Caco-2 (cell line): ENCODE measurements at regions of chr13 and their contacts with region 1.

Region 1: DNA sequence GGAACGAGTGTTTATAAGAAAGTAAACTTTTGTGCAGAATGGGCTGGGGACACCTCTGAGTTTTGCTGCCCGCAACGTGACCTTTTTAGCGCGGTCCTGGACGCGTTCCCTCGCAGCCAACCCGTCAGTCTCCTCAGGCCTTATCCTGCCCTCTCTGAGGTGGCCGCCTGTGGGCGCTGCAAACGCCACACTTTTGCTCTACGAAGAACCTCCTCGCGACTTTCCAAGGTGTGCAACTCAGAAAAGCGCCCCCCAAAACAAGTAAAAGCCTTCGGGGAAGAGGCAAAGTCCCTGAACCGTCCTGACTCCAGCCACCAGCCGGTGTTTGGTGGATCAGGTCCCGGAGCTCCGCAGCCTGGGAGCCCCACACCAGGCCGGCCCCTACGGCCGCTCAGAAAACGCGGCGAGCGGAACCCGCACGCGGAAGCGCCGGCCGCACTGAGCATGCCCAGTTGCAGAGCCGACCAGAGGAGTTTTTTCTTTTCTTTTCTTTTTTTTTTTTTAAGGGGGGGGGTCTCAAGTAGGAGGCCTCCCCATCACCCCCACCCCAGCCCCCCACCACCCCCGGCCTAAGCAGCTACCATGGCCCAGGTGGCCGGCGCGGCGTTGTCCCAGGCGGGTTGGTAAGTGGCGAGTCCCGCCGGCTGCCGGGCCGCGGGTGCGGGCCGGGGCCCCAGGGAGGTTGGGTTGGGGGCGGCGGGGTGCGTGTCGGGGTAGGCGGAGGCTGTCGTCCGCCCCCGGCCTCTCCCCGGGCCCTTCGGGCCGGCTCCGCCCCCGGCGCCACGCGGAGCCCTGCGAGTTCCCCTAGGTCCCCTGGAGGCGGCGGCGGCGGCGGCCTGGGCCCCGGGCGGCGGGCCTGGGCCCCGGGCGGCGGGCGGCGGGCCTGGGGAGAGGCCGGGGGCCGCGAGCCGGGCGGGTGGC is at the start of gene TDRD3:
- DNase-seq: peak; percentile 90 to 91
- H3K4me3 ChIP-seq: peak within 1 kb of the TSS; percentile 58
- H3K4me3 Mint-ChIP-seq: peak within 1 kb of the TSS; percentile 91
- H3K27ac Mint-ChIP-seq: peak within 1 kb of the TSS; percentile 85
- H3K4me1 ChIP-seq: peaks cover 25% of the 10 kb centered on the region
- H3K4me1 Mint-ChIP-seq: peaks cover 43% of the 10 kb centered on the region
- H3K27me3 ChIP-seq: no peaks in the 10 kb centered on the region
- H3K27me3 Mint-ChIP-seq: no peaks in the 10 kb centered on the region
- CTCF ChIP-seq: peak; percentile 83 to 94
- total RNA-seq, gene TDRD3: 16.3 and 17.2 TPM in 2 replicates

Region 2: GRCh38 chr13:60273927-60274527 is 123.0 kb before region 1 on chr13:
- CTCF ChIA-PET with region 1: no interaction called
- POLR2A ChIA-PET with region 1: no interaction called
- intact Hi-C with region 1: loop called (anchors 1 kb)
- DNase-seq: peak; percentile 72 to 79
- H3K4me3 ChIP-seq: no peak overlapping the region
- H3K4me3 Mint-ChIP-seq: peak overlapping the region; percentile 31
- H3K27ac Mint-ChIP-seq: peak overlapping the region; percentile 92
- H3K4me1 ChIP-seq: peaks cover 53% of the 10 kb centered on the region
- H3K4me1 Mint-ChIP-seq: peaks cover 33% of the 10 kb centered on the region
- H3K27me3 ChIP-seq: no peaks in the 10 kb centered on the region
- H3K27me3 Mint-ChIP-seq: no peaks in the 10 kb centered on the region
- CTCF ChIP-seq: no peak

Region 3: DNA sequence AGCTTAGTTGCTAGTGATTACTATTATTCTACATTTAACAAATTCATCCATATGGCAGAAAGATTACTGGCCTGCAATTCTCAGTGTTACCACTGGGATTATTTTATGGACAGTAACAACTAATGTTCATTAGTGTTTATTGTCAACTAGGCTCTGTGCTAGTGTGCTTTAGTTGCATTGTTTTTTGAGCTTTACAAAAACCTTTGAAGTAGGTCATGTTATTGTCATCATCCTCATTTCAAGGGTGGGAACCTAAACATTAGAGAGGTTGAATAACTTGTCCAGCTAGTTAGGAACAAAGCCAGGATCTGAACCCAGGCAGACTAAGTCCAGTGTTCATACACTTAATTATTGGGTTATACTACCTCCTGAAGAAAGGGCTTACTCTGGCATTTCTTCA is 27.8 kb before region 1 on chr13:
- CTCF ChIA-PET with region 1: interaction called, 3 read pairs
- POLR2A ChIA-PET with region 1: no interaction called
- intact Hi-C with region 1: loop called (anchors 1 kb)
- DNase-seq: no peak
- H3K4me3 ChIP-seq: no peak overlapping the region
- H3K4me3 Mint-ChIP-seq: no peak overlapping the region
- H3K27ac Mint-ChIP-seq: no peak overlapping the region
- H3K4me1 ChIP-seq: peaks cover 12% of the 10 kb centered on the region
- H3K4me1 Mint-ChIP-seq: no peaks in the 10 kb centered on the region
- H3K27me3 ChIP-seq: no peaks in the 10 kb centered on the region
- H3K27me3 Mint-ChIP-seq: no peaks in the 10 kb centered on the region
- CTCF ChIP-seq: no peak